ENCODE measurements at regions of chr9 and their contacts with region 1.

Region 1: DNA sequence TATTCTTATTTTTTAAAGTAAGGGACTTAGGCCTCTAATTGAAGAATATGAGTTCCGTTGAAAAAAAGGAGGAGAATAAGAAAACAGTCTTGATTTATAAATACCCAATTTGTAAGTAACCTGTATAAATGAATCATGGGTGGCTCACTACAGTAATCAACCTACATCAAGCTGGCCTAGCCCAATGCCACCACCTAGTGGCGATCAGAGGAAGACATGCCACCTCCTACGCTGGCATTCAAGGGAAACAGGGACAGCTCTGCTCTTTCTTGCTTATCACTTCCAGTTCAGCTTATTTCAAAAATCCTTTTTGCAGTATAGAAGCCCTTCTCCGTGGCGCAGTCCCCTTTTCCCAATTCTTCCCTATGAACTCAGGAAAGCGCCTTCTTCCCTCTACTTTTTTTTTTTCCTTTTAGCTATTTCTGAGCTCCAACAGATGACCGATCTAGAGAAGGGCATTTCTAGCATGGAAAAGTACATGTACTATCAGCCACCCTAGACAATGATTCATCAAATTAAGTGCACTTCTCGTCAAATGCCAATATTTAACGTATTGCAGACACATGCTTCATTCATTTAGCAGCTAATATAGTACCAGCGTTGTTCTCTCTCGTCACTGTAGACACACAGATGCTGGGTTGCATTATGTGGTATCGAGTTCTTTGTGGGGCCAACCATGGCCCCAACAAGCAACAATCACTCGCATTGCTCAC is 28.3 kb downstream of the PTPN3 start:
- DNase-seq: peak; percentile 80
- H3K4me3 ChIP-seq: no peak overlapping the region
- H3K27ac ChIP-seq: peak overlapping the region; percentile 22
- H3K4me1 ChIP-seq: peaks cover 56% of the 10 kb centered on the region
- H3K27me3 ChIP-seq: no peaks in the 10 kb centered on the region
- CTCF ChIP-seq: peak; percentile 97 to 98

Region 2: DNA sequence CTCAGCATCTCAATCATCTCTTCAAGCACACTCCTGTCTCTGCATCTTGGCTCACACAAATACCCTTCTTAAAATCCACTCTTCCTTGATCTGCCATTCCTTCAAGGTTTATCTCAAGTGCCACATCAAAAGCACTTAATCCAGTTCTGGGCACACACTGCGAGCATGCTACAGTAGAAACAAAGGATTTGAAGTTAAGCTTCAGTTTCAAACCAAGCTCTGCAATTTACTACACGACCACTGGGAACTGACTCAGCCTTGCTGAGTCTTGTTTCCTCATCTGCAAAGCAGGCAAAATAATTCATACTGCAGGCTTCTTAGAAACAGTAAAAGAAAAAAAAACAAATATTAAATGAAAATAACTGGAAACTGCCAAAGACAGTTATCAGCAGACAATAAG is 406.0 kb before region 1 on chr9:
- CTCF ChIA-PET with region 1: no interaction called
- dilution Hi-C with region 1: no loop called
- in situ Hi-C with region 1: no loop called
- intact Hi-C with region 1: no loop called
- DNase-seq: peak; percentile 14
- H3K4me3 ChIP-seq: no peak overlapping the region
- H3K27ac ChIP-seq: no peak overlapping the region
- H3K4me1 ChIP-seq: peaks cover 44% of the 10 kb centered on the region
- H3K27me3 ChIP-seq: no peaks in the 10 kb centered on the region
- CTCF ChIP-seq: peak; percentile 8 to 19

Region 3: DNA sequence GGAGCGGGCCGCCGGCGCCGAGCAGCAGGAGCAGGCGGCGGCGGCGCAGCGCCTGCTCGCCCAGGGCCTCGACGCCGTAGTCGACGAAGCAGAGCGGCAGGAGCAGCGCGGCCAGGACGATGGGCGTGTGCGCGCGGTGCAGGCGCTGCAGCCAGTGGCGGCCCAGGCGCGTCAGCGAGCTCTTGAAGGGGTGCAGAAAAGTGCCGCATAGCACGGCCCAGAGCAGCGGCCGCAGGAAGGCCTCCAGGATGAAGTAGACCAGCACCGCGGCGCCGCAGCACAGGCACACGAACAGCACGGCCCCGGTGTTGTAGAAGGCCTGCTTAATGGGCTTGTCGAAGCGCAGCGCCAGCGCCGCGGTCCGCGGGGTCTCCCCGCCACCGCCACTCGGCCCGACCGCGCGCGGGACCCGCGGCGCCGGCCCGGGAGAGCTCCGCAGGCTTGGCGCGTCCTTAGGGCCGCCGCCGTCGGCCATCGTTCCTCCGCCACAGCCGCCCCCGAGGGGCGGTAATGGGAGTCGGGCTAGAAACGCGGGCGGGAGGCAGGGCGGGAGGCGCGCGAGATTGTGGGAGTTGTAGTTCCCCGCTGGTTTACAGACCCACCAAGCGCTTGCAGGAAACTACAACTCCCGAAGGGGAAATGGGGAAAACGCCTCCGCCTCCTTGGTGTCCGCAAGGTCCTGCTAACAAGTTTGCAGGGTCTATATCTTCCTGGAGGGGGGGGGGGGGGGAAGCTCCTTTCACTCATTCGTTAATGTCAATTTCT is 350.2 kb before region 1 on chr9 and contains the start of gene TMEM245:
- CTCF ChIA-PET with region 1: interaction called, 29 read pairs
- dilution Hi-C with region 1: no loop called
- in situ Hi-C with region 1: no loop called
- intact Hi-C with region 1: no loop called
- DNase-seq: peak; percentile 99
- H3K4me3 ChIP-seq: peak within 1 kb of the TSS; percentile 70 to 91 (median 89)
- H3K27ac ChIP-seq: peak within 1 kb of the TSS; percentile 46
- H3K4me1 ChIP-seq: peaks cover 15% of the 10 kb centered on the region
- H3K27me3 ChIP-seq: no peaks in the 10 kb centered on the region
- CTCF ChIP-seq: no peak
- total RNA-seq, gene TMEM245: 33.1 to 70.3 TPM

Region 4: DNA sequence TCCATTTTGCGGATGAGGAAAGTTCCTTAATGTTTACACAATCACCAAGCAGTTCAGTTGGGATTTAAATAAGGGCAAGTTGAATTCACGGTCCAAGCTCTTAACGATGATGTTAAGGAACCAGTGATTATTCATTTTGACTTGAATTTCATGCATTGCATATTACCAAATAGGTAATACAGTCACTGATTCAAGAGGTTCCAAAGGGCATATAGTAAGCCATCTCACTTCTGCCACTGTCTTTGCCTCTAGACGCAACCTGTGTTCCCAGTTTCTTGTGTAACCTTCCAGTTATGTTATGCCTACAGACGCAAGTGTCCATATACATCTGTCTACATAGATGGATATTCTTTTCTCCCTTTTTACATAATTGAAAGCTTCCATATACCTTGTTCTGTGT is 109.0 kb before region 1 on chr9:
- CTCF ChIA-PET with region 1: no interaction called
- dilution Hi-C with region 1: no loop called
- in situ Hi-C with region 1: no loop called
- intact Hi-C with region 1: no loop called
- DNase-seq: no peak
- H3K4me3 ChIP-seq: no peak overlapping the region
- H3K27ac ChIP-seq: no peak overlapping the region
- H3K4me1 ChIP-seq: no peaks in the 10 kb centered on the region
- H3K27me3 ChIP-seq: no peaks in the 10 kb centered on the region
- CTCF ChIP-seq: no peak

Region 5: GRCh38 chr9:109381011-109381729 is 88.6 kb before region 1 on chr9:
- CTCF ChIA-PET with region 1: no interaction called
- dilution Hi-C with region 1: no loop called
- in situ Hi-C with region 1: no loop called
- intact Hi-C with region 1: no loop called
- DNase-seq: peak; percentile 43
- H3K4me3 ChIP-seq: no peak overlapping the region
- H3K27ac ChIP-seq: no peak overlapping the region
- H3K4me1 ChIP-seq: no peaks in the 10 kb centered on the region
- H3K27me3 ChIP-seq: no peaks in the 10 kb centered on the region
- CTCF ChIP-seq: no peak

Region 6: GRCh38 chr9:109401168-109401989 is 68.4 kb before region 1 on chr9:
- CTCF ChIA-PET with region 1: no interaction called
- dilution Hi-C with region 1: no loop called
- in situ Hi-C with region 1: no loop called
- intact Hi-C with region 1: loop called (anchors 1 kb)
- DNase-seq: peak; percentile 53
- H3K4me3 ChIP-seq: no peak overlapping the region
- H3K27ac ChIP-seq: no peak overlapping the region
- H3K4me1 ChIP-seq: no peaks in the 10 kb centered on the region
- H3K27me3 ChIP-seq: no peaks in the 10 kb centered on the region
- CTCF ChIP-seq: peak; percentile 88 to 94

Region 7: DNA sequence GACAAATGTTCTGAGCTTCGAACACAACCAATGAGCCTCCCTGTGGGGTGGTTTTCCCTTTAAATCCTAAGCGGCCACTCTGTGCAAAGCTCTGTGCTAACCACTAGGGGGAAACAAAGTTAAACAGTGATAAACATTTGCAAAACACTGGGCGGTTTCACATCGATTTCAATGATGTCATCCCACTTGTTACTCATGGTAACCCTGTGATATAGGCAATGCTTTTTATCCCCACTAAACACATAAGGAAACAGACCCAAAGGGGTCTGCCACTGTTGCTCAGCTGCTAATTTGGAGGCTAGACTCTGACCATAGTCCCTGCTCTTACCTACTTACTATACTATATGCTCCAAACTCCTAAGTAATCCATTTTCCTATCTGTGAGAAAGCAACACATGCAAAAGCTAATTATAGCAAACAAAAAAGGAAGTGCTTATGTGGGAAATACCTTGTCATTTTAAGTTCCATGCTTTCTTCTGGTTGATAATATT is 29.0 kb before region 1 on chr9:
- CTCF ChIA-PET with region 1: interaction called, 12 read pairs
- dilution Hi-C with region 1: no loop called
- in situ Hi-C with region 1: no loop called
- intact Hi-C with region 1: loop called (anchors 1 kb)
- DNase-seq: peak; percentile 77
- H3K4me3 ChIP-seq: no peak overlapping the region
- H3K27ac ChIP-seq: peak overlapping the region; percentile 51
- H3K4me1 ChIP-seq: peaks cover 22% of the 10 kb centered on the region
- H3K27me3 ChIP-seq: no peaks in the 10 kb centered on the region
- CTCF ChIP-seq: peak; percentile 91 to 92

Region 8: DNA sequence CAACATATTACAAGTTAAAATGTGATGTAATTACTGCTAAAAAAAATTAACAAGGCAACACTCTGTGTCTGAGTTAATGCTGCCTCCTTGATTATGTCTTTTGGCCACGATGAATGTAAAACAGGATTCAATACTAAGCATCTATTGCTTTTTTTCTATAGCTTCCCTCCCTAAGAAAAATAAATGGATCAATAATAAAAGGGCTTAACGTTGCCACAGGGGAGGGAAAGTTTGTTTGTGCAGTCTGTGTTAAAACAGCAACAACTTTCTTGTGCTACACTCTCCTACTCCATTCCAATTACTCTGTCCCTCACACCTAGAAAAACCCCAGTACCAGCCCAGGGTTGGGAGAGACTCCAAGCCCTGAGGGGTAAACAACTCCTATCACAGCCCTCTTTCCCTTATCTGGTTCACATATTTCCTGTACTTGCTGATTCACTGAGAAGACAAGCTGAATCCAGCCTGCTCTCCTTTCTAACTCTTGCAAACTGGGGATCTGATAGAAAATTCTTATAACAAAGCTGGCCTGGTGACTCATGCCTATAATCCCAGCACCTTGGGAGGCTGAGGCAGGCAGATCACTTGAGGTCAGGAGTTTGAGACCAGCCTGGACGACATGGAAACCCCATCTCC is 16.5 kb before region 1 on chr9:
- CTCF ChIA-PET with region 1: interaction called, 3 read pairs
- dilution Hi-C with region 1: no loop called
- in situ Hi-C with region 1: no loop called
- intact Hi-C with region 1: loop called (anchors 1 kb)
- DNase-seq: peak; percentile 97
- H3K4me3 ChIP-seq: no peak overlapping the region
- H3K27ac ChIP-seq: peak overlapping the region; percentile 68
- H3K4me1 ChIP-seq: peaks cover 44% of the 10 kb centered on the region
- H3K27me3 ChIP-seq: no peaks in the 10 kb centered on the region
- CTCF ChIP-seq: no peak

Region 9: DNA sequence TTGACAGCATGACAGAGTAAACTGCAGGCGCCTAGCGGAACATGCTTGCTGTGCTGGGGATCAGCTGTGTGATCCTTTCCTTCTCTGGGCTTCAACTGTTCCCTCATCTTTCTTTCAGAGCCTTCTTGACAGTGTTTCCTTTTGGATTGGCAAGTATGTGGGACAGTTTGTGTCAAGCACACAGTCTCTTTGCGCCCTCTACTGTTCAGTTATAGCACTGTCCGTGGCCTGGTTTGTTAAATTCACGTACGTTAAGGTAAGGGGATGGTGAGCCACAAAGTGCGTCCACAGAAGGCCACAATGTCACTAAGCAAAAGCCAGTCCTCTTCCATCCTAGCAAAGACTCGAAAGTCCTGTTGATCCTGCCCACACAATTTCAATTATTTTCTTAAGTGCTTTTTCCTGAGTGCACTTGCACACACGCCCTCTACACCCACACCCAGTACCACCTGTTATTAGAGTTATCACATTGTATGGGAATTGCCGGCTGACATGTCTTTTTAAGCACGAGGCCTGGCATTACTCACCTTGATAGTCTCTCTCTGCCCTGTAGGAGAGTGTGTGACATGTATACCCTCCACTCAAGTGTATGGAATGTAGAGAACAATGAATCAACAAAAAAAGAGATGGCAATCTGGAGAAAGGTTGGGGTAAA is 50.8 kb after region 1 on chr9:
- CTCF ChIA-PET with region 1: interaction called, 6 read pairs
- dilution Hi-C with region 1: no loop called
- in situ Hi-C with region 1: no loop called
- intact Hi-C with region 1: loop called (anchors 1 kb)
- DNase-seq: peak; percentile 81
- H3K4me3 ChIP-seq: no peak overlapping the region
- H3K27ac ChIP-seq: peak overlapping the region; percentile 9
- H3K4me1 ChIP-seq: peaks cover 11% of the 10 kb centered on the region
- H3K27me3 ChIP-seq: no peaks in the 10 kb centered on the region
- CTCF ChIP-seq: peak; percentile 93 to 98

Region 10: DNA sequence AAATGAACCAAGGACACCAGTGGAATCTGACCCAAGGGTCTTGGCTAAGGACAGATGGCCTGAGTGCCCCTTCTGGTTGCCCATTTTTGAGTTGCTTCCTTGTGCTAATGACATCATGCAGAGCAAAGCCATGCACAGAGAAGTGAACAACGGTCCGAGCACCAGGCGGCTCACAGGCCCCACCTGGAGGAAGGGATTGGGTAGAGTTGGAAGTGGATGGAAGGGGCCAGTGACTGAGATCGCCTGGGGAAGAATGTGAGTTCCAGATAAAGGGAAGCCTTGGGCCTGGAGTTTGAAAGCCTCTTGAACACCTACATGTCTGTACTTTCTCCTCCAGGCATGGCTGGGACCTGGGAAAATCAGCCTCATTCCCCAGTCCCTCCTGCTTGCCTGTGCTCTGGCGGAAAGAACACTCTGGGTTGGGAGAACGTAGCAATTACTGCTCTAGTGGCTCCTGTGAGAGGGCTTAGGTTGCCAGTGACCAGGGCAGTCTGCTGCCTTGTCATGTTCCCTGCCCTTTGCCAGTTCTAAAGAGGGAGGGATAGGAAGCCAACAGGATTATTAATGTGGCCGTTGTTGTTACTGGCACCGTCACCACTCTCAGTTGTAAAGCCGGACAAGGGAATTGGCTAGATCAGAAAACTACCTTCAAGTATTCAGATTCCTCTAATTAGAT is 90.8 kb after region 1 on chr9:
- CTCF ChIA-PET with region 1: no interaction called
- dilution Hi-C with region 1: no loop called
- in situ Hi-C with region 1: no loop called
- intact Hi-C with region 1: loop called (anchors 2 kb)
- DNase-seq: no peak
- H3K4me3 ChIP-seq: no peak overlapping the region
- H3K27ac ChIP-seq: no peak overlapping the region
- H3K4me1 ChIP-seq: peaks cover 24% of the 10 kb centered on the region
- H3K27me3 ChIP-seq: no peaks in the 10 kb centered on the region
- CTCF ChIP-seq: peak; percentile 32 to 49

Region 11: DNA sequence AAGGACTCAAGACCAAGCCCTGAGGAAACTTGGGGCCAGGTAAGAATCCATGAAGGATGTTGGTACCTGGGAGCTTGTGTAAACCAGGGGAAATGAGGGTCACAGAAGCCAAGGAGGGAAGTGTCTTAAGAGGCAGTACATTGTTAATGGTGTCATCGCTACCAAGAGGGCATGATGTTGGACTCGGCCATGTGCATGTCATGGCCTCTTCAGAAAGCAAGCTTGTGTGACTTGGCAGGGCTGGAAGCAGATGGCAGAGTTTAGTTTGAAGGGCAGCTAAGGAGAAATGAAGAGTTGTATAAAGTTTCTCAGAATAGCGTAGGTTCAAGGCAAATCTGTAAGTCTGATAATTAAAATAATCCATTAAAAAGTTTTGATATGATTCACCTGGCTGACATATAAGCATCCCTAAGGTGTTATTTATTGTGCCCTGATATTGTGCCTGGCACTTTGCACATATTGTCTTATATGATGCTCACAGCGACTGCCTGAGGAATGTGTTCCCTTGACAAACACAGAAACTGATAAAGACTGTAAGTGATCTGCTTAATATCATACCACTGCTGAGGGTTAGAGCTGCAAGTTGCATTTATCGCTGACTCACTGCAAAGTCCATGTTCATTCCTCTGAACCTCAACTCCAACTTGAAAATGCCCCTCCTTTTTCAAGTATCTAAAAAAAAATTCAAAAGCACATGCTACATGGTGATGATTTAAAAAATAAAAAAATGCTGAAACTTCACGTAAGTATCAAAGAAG is 109.6 kb after region 1 on chr9:
- CTCF ChIA-PET with region 1: no interaction called
- dilution Hi-C with region 1: no loop called
- in situ Hi-C with region 1: no loop called
- intact Hi-C with region 1: no loop called
- DNase-seq: no peak
- H3K4me3 ChIP-seq: no peak overlapping the region
- H3K27ac ChIP-seq: no peak overlapping the region
- H3K4me1 ChIP-seq: peaks cover 5% of the 10 kb centered on the region
- H3K27me3 ChIP-seq: no peaks in the 10 kb centered on the region
- CTCF ChIP-seq: no peak

Measured in mammary epithelial cell (primary cell).